ENCODE measurements at regions of chr14 and their contacts with region 1.

Region 1: GRCh38 chr14:75452900-75453747 is 25.3 kb downstream of the JDP2 start:
- DNase-seq: peak; percentile 100
- H3K4me3 ChIP-seq: peak overlapping the region; percentile 17; the same call in 1 of the 2 replicates
- H3K27ac ChIP-seq: peak overlapping the region; percentile 93
- H3K4me1 ChIP-seq: peaks cover 96% of the 10 kb centered on the region
- H3K27me3 ChIP-seq: no peaks in the 10 kb centered on the region
- CTCF ChIP-seq: peak; percentile 26; the same call in 1 of the 2 replicates

Region 2: DNA sequence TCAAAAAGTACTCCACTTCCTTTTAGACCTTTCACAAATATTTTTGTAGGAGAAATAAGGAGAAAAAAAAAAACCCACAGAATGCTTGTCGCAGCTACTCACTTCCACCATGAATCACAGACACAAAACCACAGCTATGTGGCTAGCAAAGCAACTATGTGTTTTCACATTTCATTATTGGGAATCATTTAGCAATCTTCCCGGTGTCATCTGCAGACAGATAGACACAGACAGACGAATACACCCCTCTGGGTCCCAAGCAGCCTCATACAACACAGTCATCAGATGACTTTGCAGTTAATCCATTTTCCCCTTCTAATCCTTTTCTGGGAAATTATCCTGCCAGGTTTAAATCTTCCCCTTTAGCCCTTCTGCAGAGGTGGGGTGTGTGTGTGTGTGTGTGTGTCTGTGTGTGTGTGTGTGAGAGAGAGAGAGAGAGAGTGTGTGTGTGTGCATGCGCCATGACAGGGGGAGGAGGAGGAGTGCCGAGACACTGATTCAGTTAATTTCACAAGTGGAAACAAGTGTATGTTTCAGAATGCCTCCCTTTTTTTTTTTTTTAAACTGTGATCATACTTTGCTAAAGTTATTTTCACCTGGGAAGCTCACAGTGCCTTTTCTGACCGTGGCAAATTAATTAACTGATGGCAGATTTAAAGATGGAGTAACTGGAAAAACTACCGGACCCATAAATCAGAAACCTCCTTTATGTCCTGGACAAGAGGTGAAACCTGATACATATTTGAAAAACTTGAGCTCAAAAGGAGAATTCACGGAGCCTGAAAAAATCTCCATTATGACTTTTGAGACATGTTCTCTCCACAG is 881.0 kb before region 1 on chr14:
- CTCF ChIA-PET with region 1: no interaction called
- POLR2A ChIA-PET with region 1: no interaction called
- intact Hi-C with region 1: loop called (anchors 5 kb)
- DNase-seq: peak; percentile 87 to 100
- H3K4me3 ChIP-seq: peak overlapping the region; percentile 52
- H3K27ac ChIP-seq: peak overlapping the region; percentile 99
- H3K4me1 ChIP-seq: peaks cover 92% of the 10 kb centered on the region
- H3K27me3 ChIP-seq: no peaks in the 10 kb centered on the region
- CTCF ChIP-seq: no peak

Region 3: DNA sequence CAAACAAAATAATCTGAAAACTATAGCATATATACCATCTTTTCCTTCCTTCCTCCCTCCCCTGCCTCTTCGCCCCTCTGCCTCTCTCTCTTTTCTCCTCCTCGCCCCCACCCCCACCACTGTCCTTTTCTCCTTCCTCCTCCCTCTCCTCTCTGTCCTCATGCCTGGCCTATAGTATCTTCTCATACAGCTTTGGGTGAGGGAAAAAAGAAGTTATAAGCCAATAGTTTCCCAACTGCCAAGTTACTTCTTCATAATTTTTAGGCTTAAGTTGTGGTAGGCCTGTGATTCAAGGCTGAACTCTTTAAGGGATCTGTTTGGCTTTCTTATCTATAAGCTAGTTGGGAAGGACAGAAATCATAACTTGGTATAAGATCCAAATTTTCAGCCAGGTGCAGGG is 285.8 kb before region 1 on chr14:
- CTCF ChIA-PET with region 1: no interaction called
- POLR2A ChIA-PET with region 1: interaction called, 15 read pairs
- intact Hi-C with region 1: no loop called
- DNase-seq: no peak
- H3K4me3 ChIP-seq: no peak overlapping the region
- H3K27ac ChIP-seq: no peak overlapping the region
- H3K4me1 ChIP-seq: peaks cover 15% of the 10 kb centered on the region; the same call in 1 of the 2 replicates
- H3K27me3 ChIP-seq: no peaks in the 10 kb centered on the region
- CTCF ChIP-seq: no peak

Region 4: GRCh38 chr14:75307700-75308379 is 145.3 kb before region 1 on chr14:
- CTCF ChIA-PET with region 1: interaction called, 11 read pairs
- POLR2A ChIA-PET with region 1: interaction called, 3 read pairs
- intact Hi-C with region 1: loop called (anchors 1 kb)
- DNase-seq: peak; percentile 77 to 97
- H3K4me3 ChIP-seq: no peak overlapping the region
- H3K27ac ChIP-seq: no peak overlapping the region
- H3K4me1 ChIP-seq: peaks cover 15% of the 10 kb centered on the region
- H3K27me3 ChIP-seq: no peaks in the 10 kb centered on the region
- CTCF ChIP-seq: peak; percentile 99

Region 5: DNA sequence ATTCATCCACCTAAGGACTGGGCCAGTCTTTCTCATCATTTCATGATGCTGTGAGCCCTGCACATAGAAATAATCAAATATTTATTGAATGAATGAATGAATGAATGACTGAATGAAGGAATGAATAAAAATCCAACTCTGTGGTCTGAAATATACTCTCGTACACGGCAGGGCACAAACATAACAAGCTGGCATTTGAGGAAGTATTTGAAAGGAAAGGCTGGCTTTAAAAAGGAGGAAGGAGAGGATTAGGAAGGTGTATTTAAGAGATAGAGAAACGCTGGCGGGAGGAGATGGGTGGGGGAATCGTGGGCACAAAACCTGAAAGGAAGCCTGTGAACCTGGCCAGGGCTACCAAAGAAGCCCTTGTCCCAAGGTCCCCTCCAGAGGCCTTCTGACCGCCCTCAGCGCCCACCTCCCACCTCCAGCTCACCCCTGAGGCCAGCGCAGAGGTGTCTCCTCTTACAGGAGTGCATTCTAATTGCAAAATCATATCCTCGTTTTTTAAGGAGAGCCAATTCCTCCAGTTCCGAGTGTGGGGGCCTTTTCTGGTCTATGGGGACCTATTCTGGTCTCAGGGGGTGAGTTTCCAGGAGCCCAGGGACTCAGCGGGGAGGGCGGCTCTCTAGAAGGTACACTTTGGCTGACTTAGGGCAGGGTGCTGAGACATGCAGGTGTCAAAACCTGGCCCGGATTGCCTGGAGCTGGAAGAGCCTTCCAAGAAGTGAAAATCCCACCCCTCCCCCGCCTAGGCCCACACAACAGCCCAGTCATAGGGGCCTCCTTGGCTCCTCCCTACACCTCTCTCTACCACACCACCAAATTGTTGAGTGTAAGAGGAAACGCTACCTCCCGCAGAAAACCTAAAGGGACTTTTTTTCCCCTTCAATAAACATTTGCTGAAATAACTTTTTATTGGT is 34.0 kb before region 1 on chr14:
- CTCF ChIA-PET with region 1: no interaction called
- POLR2A ChIA-PET with region 1: no interaction called
- intact Hi-C with region 1: no loop called
- DNase-seq: peak in 1 of 2 experiments; percentile 35
- H3K4me3 ChIP-seq: no peak overlapping the region
- H3K27ac ChIP-seq: no peak overlapping the region
- H3K4me1 ChIP-seq: peaks cover 10% of the 10 kb centered on the region; the same call in 1 of the 2 replicates
- H3K27me3 ChIP-seq: no peaks in the 10 kb centered on the region
- CTCF ChIP-seq: no peak

Region 6: GRCh38 chr14:75487155-75487671 is 34.1 kb after region 1 on chr14:
- CTCF ChIA-PET with region 1: interaction called, 7 read pairs
- POLR2A ChIA-PET with region 1: interaction called, 16 read pairs
- intact Hi-C with region 1: loop called (anchors 1 kb)
- DNase-seq: peak; percentile 83 to 99
- H3K4me3 ChIP-seq: no peak overlapping the region
- H3K27ac ChIP-seq: 0 out of 2 replicates have a peak overlapping the region, but pooled peaks have one; percentile 5
- H3K4me1 ChIP-seq: peaks cover 18% of the 10 kb centered on the region
- H3K27me3 ChIP-seq: no peaks in the 10 kb centered on the region
- CTCF ChIP-seq: no peak

Region 7: DNA sequence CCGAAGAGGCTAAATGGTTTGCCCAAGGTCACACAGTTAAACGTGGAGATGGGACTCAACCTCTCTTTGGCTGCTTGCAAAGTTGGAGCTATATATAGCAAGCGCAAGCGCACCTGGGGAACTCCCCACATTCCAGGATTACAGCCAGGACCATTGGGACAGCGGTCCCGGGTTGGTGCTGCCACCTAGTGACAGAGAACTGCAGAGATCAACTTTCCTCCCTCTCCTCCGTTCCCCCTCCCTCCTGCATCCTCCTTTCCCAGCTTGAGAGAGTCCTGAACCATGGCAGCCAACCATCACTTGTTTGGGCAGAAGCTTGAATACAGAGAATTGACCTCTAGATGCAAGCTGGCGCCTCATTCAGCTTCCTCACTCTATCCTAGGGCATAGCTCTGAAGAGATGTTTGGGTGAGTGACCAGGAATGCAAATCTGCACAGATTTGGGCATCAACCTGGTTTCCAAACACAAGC is 107.9 kb after region 1 on chr14:
- CTCF ChIA-PET with region 1: interaction called, 12 read pairs
- POLR2A ChIA-PET with region 1: interaction called, 4 read pairs
- intact Hi-C with region 1: loop called (anchors 1 kb)
- DNase-seq: peak; percentile 90 to 98
- H3K4me3 ChIP-seq: no peak overlapping the region
- H3K27ac ChIP-seq: peak overlapping the region; percentile 89
- H3K4me1 ChIP-seq: peaks cover 57% of the 10 kb centered on the region
- H3K27me3 ChIP-seq: no peaks in the 10 kb centered on the region
- CTCF ChIP-seq: peak; percentile 99

Region 8: DNA sequence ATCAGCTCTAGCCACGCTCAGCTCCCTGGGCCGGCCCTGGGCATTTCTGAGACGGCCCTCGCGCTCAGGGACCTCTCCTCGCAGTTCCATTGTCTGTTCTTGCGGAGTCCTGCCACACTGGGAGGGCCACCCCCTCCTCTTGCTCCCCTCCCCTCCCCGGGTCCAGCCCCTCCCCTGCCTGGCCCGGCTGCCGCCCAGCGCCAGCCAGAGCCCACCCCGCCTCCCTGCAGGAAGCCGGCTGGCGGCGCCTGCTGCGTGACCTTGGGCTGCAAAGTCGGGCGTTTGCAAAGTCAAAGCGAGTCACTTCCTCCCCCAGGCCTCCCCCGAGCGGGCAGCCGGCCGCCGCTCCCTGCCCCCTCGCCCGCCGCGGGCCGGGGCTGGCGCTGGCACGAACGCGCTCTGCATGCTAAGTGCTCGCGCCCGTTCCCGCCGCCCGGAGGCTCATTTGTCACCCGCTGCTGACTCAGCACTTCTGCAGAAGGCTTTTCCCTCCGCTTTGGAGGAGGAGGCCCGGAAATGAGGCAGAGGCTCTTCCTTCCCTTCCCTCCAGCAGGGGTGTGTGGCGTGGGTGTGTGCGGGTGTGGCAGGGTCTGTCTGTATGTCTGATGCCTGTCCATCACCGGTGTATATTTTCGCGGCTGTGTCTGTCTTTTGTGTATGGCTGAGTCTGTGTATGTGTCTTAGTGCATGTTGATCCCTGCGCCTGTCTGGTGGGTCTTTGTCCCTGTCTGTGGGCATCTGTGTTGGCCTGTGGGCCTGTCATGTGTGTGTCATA is 1503.4 kb after region 1 on chr14:
- CTCF ChIA-PET with region 1: no interaction called
- POLR2A ChIA-PET with region 1: no interaction called
- intact Hi-C with region 1: loop called (anchors 5 kb)
- DNase-seq: peak; percentile 92 to 99
- H3K4me3 ChIP-seq: peak overlapping the region; percentile 48; the same call in 1 of the 2 replicates
- H3K27ac ChIP-seq: peak overlapping the region; percentile 90
- H3K4me1 ChIP-seq: peaks cover 98% of the 10 kb centered on the region
- H3K27me3 ChIP-seq: no peaks in the 10 kb centered on the region
- CTCF ChIP-seq: no peak; the same call in 1 of the 2 replicates

Measured in PC-9 (cell line).